ENCODE measurements at regions of chr1 and their contacts with region 1.

Region 1: DNA sequence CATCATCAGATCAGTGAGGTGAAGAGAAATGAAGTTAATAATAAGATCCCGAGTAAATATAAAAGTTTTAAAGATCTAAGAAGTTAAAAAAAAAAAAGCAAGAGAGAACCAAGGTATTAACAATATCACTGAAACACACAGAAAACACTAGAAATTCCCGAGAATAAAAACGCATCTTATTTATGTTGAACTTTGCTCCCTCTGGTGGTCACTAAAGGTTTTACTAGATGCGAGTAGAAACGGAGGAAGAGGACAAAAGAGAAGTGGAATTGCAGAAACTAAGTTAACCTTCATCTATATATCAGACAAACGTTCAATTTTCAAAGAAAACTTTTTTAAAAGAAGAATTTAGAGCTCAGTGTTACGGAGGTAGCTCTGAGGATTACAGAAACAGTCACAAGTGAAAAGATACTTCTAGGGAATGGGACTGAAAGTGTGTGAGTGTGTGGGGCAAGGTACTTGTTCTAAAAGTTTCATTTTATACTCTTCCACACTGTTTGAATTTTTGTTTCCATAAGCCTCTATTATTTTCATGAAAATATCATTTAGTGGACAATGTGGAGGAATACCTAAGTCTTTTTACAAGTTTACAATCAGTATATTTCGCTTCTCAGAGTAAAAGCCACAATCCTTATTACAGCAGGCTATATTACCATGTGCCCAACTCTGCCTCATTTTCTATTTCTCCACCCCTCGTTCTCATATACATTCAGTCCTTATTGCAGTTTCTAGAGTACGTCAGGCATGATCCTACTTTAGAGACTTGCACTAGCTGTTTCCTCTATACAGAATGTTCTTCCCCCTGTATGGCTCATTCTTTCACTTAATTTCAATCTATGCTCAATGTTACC is 19.7 kb downstream of the ACBD6 start:
- DNase-seq: peak; percentile 52
- CTCF ChIP-seq: peak; percentile 52

Region 2: DNA sequence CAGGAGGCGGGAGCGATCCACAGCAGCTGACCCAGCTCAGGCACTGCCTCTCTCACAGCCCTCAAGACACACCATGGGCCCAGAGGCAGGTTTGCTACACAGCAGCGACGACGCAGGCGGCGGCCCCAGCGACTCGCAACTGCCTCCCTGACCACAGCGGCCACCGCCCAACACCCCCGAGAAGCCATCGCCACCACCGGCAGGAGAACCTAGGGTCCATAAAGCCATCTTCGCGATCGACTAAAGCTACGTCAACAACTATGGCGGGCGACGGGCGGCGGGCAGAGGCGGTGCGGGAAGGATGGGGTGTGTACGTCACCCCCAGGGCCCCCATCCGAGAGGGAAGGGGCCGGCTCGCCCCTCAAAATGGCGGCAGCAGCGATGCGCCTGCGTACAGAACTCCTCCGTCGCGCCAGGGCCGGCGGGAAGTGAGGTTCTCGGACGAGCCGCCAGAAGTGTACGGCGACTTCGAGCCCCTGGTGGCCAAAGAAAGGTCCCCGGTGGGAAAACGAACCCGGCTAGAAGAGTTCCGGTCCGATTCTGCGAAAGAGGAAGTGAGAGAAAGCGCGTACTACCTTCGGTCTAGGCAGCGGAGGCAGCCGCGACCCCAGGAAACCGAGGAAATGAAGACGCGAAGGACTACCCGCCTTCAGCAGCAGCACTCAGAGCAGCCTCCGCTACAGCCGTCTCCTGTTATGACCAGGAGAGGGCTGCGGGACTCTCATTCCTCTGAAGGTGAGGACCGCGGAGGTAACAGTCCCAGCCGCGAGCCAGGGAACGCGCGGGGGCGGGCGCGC is 600.2 kb before region 1 on chr1 and contains the start of gene TOR1AIP1:
- in situ Hi-C with region 1: loop called (anchors 25 kb)
- DNase-seq: peak; percentile 92
- CTCF ChIP-seq: peak; percentile 10

Region 3: GRCh38 chr1:180252638-180253536 is 229.8 kb before region 1 on chr1:
- in situ Hi-C with region 1: loop called (anchors 5 kb)
- DNase-seq: peak; percentile 87
- CTCF ChIP-seq: peak; percentile 90

Region 4: GRCh38 chr1:180424848-180425457 is 57.7 kb before region 1 on chr1:
- in situ Hi-C with region 1: no loop called
- DNase-seq: no peak
- CTCF ChIP-seq: no peak

Region 5: DNA sequence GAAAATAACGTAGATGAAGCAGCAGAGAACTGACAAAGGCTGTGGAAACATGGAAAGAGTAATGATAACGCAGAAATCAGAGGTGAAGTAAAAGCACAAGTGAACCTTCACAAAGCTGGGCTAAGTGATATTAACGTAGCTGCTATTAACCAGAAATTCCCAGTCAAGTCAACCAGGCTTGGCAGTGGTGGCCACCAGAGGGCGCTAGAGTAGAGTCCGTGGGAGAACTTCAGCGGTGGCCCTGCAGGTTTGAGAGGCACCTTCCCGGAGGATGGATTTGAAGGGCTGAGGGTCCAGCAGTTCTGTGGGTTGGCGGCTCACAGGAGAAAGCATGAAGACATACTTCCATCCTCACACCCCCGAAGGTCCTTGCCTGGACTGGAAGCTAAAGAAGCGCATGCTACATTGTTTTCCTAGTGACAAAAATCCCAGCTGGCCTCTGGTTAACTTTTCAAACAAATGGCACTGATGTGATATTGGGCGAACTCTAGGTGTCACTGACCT is 1660.6 kb after region 1 on chr1:
- in situ Hi-C with region 1: no loop called
- DNase-seq: peak; percentile 73
- CTCF ChIP-seq: peak; percentile 94

Measured in GM13976 (cell line).